ENCODE measurements at regions of chr3 and their contacts with region 1.

Region 1: GRCh38 chr3:38117748-38118420 is 19.0 kb downstream of the ACAA1 start:
- DNase-seq: peak; percentile 59 to 79 (median 73)
- ATAC-seq: peak; percentile 90
- H3K4me3 ChIP-seq: no peak overlapping the region
- H3K4me3 Mint-ChIP-seq: no peak overlapping the region
- H3K27ac ChIP-seq: no peak overlapping the region
- H3K27ac Mint-ChIP-seq: peak overlapping the region in 5 of 9 donors; percentile 22 to 84 (median 49)
- H3K4me1 ChIP-seq: no peaks in the 10 kb centered on the region
- H3K4me1 Mint-ChIP-seq: peaks cover 4 to 15% (median 7%) of the 10 kb centered on the region in 7 donors
- H3K27me3 ChIP-seq: no peaks in the 10 kb centered on the region
- H3K27me3 Mint-ChIP-seq: no peaks in the 10 kb centered on the region

Region 2: GRCh38 chr3:38210141-38210757 is 92.4 kb after region 1 on chr3:
- CTCF ChIA-PET with region 1: interaction called, 4 read pairs
- POLR2A ChIA-PET with region 1: no interaction called
- intact Hi-C with region 1: loop called in 1 of 2 experiments (anchors 5 kb)
- DNase-seq: no peak
- ATAC-seq: peak; percentile 48
- H3K4me3 ChIP-seq: no peak overlapping the region
- H3K4me3 Mint-ChIP-seq: peak overlapping the region in 2 of 10 donors; percentile 21 to 52
- H3K27ac ChIP-seq: no peak overlapping the region
- H3K27ac Mint-ChIP-seq: peak overlapping the region in 5 of 9 donors; percentile 5 to 74 (median 65)
- H3K4me1 ChIP-seq: no peaks in the 10 kb centered on the region
- H3K4me1 Mint-ChIP-seq: peaks cover 11 to 71% (median 68%) of the 10 kb centered on the region in 7 donors
- H3K27me3 ChIP-seq: no peaks in the 10 kb centered on the region
- H3K27me3 Mint-ChIP-seq: no peaks in the 10 kb centered on the region

Region 3: GRCh38 chr3:38247366-38248035 is 129.6 kb after region 1 on chr3:
- CTCF ChIA-PET with region 1: interaction called, 3 read pairs
- POLR2A ChIA-PET with region 1: no interaction called
- intact Hi-C with region 1: loop called in 1 of 2 experiments (anchors 2 kb)
- DNase-seq: no peak
- ATAC-seq: no peak
- H3K4me3 ChIP-seq: no peak overlapping the region
- H3K4me3 Mint-ChIP-seq: no peak overlapping the region
- H3K27ac ChIP-seq: no peak overlapping the region
- H3K27ac Mint-ChIP-seq: peak overlapping the region in 2 of 9 donors; percentile 55 to 91
- H3K4me1 ChIP-seq: no peaks in the 10 kb centered on the region
- H3K4me1 Mint-ChIP-seq: peaks cover 0 to 6% (median 0%) of the 10 kb centered on the region in 7 donors
- H3K27me3 ChIP-seq: no peaks in the 10 kb centered on the region
- H3K27me3 Mint-ChIP-seq: no peaks in the 10 kb centered on the region

Region 4: DNA sequence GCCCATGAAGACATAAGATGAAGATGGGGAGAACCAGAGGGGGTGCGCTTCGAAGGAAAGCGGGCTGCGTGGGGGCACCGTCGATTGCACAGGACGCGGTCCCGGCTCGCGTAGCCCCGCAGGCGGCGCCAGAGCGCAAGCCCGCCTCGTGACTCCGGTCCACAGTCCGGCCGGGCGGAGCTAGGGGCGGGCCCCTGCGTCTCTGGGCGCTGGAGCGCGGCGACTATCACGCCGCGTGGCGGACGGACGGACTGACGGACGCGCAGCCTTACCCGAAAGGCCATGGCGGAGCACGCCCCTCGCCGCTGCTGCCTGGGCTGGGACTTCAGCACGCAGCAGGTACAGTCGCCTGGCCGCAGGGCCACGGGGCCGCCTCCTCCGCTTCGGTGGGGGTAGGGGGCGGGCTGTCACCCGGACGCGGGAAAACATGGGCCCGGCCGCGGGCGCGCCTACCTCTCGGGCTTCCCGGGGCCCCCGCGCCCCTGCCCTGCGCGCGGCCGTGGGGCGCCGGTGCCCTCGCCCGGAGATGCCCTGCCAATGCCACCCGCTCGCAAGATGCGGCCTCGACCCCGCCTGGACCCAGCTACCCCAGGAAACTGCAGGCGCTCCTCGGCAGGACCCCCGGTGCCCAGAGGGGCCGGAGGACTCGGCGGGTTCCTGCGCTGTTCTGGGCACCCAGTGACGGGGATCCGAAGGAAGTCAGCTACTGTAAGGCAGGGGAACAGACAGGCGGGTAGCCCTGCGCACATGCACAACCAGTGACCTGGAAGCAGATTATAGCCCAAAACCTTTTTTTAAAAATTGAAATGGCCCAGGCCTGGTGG is 228.9 kb after region 1 on chr3 and contains the start of gene XYLB:
- CTCF ChIA-PET with region 1: interaction called, 6 read pairs
- POLR2A ChIA-PET with region 1: no interaction called
- intact Hi-C with region 1: loop called (anchors 2 kb)
- DNase-seq: peak; percentile 48 to 89 (median 67)
- ATAC-seq: peak; percentile 99
- H3K4me3 ChIP-seq: peak within 1 kb of the TSS; percentile 62
- H3K4me3 Mint-ChIP-seq: peak within 1 kb of the TSS; percentile 71 to 91 (median 83)
- H3K27ac ChIP-seq: peak within 1 kb of the TSS; percentile 61
- H3K27ac Mint-ChIP-seq: peak within 1 kb of the TSS in 3 of 9 donors; percentile 54 to 61 (median 54)
- H3K4me1 ChIP-seq: no peaks in the 10 kb centered on the region
- H3K4me1 Mint-ChIP-seq: peaks cover 2 to 7% (median 5%) of the 10 kb centered on the region in 7 donors
- H3K27me3 ChIP-seq: no peaks in the 10 kb centered on the region
- H3K27me3 Mint-ChIP-seq: peaks cover 0 to 4% (median 0%) of the 10 kb centered on the region in 5 donors
- total RNA-seq, gene XYLB: 1.00 to 6.7 (median 2.1) TPM

Region 5: DNA sequence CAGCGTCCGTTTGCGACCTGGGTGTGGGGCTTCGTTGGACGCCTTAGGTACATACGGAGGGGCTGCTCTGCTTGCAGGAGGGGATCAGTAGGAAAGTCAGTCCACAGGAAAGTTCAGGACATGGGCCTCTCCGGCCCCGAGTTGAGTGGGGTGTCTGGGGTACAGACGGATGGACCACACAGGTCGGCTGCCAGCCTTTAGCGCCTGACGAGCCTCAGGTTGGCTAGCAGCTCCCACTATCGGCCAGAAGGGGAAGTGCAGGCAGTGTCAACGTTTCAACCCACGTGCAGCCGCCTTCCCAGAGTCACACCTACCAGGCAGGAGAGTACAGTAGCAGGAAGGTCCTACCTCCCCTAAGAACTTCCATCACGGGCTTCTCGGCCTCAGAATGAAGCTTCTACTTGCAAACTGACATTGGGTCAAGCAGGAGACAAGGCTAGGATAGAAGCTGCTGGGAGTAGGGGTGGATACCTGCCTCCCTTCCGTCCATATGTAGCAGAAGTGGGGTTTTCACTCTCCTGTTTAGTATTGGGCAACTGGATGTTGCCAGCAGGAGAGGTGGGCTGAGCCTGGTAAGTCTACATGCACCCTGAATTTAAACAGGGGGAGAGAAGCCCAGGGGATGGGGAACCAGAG is 533.4 kb after region 1 on chr3:
- CTCF ChIA-PET with region 1: no interaction called
- POLR2A ChIA-PET with region 1: no interaction called
- intact Hi-C with region 1: loop called in 1 of 2 experiments (anchors 5 kb)
- DNase-seq: peak; percentile 38 to 73 (median 66)
- ATAC-seq: peak; percentile 73
- H3K4me3 ChIP-seq: peak overlapping the region; percentile 34
- H3K4me3 Mint-ChIP-seq: no peak overlapping the region
- H3K27ac ChIP-seq: no peak overlapping the region
- H3K27ac Mint-ChIP-seq: no peak overlapping the region
- H3K4me1 ChIP-seq: peaks cover 5 to 6% of the 10 kb centered on the region in 2 donors
- H3K4me1 Mint-ChIP-seq: peaks cover 0 to 10% (median 8%) of the 10 kb centered on the region in 7 donors
- H3K27me3 ChIP-seq: peaks cover 10 to 11% of the 10 kb centered on the region in 2 donors
- H3K27me3 Mint-ChIP-seq: peaks cover 4 to 23% (median 16%) of the 10 kb centered on the region in 5 donors